Sigmoid colon (tissue), 7 donors: ENCODE measurements at regions of chr11 and their contacts with region 1.

Region 1: DNA sequence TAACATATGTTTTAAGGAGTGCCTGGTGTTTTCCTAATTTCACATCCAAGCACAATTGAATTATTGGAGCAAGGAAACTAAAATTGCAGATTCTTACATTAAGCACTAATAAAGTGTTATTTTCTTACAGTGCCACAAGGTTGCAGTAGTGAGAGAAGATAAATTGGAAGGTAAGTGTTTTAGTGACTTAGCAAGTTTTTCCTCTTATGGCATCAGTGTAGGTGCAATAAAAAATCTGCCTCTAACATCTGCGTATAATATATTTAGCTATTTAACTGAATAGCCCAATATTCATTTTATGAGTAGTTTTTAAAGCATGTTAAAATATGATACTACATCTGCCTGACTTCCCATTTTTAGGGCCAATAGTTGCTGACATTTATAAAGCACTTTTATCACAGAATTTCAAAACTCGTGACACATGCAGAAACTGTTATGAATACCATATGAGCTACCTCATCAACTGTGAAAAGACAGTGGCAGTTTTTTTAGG is 19.0 kb downstream of the POLD3 start:
- DNase-seq: no peak
- H3K4me3 ChIP-seq: no peak overlapping the region
- H3K27ac ChIP-seq: peak overlapping the region; percentile 74 to 86 (median 83)
- H3K4me1 ChIP-seq: peaks cover 0 to 59% (median 48%) of the 10 kb centered on the region in 4 donors
- H3K27me3 ChIP-seq: no peaks in the 10 kb centered on the region
- CTCF ChIP-seq: peak; percentile 52 to 73 (median 58)
- EP300 ChIP-seq: peak in 3 of 4 donors; percentile 48 to 78 (median 66)
- POLR2A ChIP-seq: no peak

Region 2: DNA sequence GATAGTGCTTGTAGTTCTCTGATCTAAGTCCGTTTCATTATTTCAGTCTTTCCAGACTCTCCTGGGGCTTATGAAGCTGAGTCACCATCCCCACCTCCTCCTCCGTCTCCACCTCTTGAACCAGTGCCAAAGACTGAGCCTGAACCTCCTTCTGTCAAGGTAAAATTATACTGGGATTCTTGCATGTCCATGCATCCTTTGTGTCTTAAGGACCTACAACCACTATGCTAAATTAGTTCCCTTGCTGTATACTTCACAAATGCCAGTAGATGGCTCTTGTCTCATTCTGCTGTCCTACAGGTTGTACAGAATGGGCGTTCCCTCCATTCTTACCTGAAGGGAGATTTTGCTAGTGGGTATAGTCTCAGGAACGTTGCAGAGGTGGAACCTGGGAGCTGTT is 23.1 kb after region 1 on chr11:
- intact Hi-C with region 1: loop called (anchors 2 kb)
- DNase-seq: no peak
- H3K4me3 ChIP-seq: no peak overlapping the region
- H3K27ac ChIP-seq: peak overlapping the region in 3 of 4 donors; percentile 71 to 89 (median 81)
- H3K4me1 ChIP-seq: peaks cover 0 to 94% (median 61%) of the 10 kb centered on the region in 4 donors
- H3K27me3 ChIP-seq: no peaks in the 10 kb centered on the region
- CTCF ChIP-seq: peak in 2 of 4 experiments; percentile 18 to 24
- EP300 ChIP-seq: no peak
- POLR2A ChIP-seq: no peak

Region 3: GRCh38 chr11:74641905-74642304 is 30.5 kb after region 1 on chr11:
- intact Hi-C with region 1: loop called (anchors 2 kb)
- DNase-seq: no peak
- H3K4me3 ChIP-seq: no peak overlapping the region
- H3K27ac ChIP-seq: peak overlapping the region in 3 of 4 donors; percentile 81 to 89 (median 85)
- H3K4me1 ChIP-seq: peaks cover 0 to 81% (median 68%) of the 10 kb centered on the region in 4 donors
- H3K27me3 ChIP-seq: no peaks in the 10 kb centered on the region
- CTCF ChIP-seq: no peak
- EP300 ChIP-seq: no peak
- POLR2A ChIP-seq: no peak

Region 4: GRCh38 chr11:74672956-74673692 is 61.7 kb after region 1 on chr11:
- intact Hi-C with region 1: no loop called
- DNase-seq: peak; percentile 93
- H3K4me3 ChIP-seq: no peak overlapping the region
- H3K27ac ChIP-seq: peak overlapping the region; percentile 72 to 91 (median 84)
- H3K4me1 ChIP-seq: peaks cover 3 to 35% (median 23%) of the 10 kb centered on the region in 4 donors
- H3K27me3 ChIP-seq: no peaks in the 10 kb centered on the region
- CTCF ChIP-seq: no peak
- EP300 ChIP-seq: peak in 2 of 4 donors; percentile 61 to 68
- POLR2A ChIP-seq: no peak

Region 5: GRCh38 chr11:74696932-74697687 is 85.7 kb after region 1 on chr11:
- intact Hi-C with region 1: loop called (anchors 2 kb)
- DNase-seq: peak; percentile 97
- H3K4me3 ChIP-seq: peak overlapping the region in 2 of 4 donors; percentile 12 to 14
- H3K27ac ChIP-seq: peak overlapping the region; percentile 83 to 91 (median 86)
- H3K4me1 ChIP-seq: peaks cover 0 to 54% (median 48%) of the 10 kb centered on the region in 4 donors
- H3K27me3 ChIP-seq: no peaks in the 10 kb centered on the region
- CTCF ChIP-seq: no peak
- EP300 ChIP-seq: peak in 2 of 4 donors; percentile 96 to 98
- POLR2A ChIP-seq: no peak

Region 6: GRCh38 chr11:74726547-74727182 is 115.2 kb after region 1 on chr11:
- intact Hi-C with region 1: loop called (anchors 2 kb)
- DNase-seq: peak; percentile 93
- H3K4me3 ChIP-seq: no peak overlapping the region
- H3K27ac ChIP-seq: peak overlapping the region; percentile 37 to 93 (median 81)
- H3K4me1 ChIP-seq: peaks cover 0 to 75% (median 47%) of the 10 kb centered on the region in 4 donors
- H3K27me3 ChIP-seq: peaks cover 0 to 10% (median 0%) of the 10 kb centered on the region in 3 donors
- CTCF ChIP-seq: peak; percentile 93 to 98 (median 96)
- EP300 ChIP-seq: no peak
- POLR2A ChIP-seq: no peak